HCT116 (cell line): ENCODE measurements at regions of chrX and their contacts with region 1.

Region 1: GRCh38 chrX:154505734-154506133 is 10.3 kb downstream of the FAM3A start:
- DNase-seq: no peak
- ATAC-seq: 0 out of 2 replicates have a peak, but pooled peaks have one; percentile 22
- H3K4me3 ChIP-seq: no peak overlapping the region
- H3K27ac ChIP-seq: no peak overlapping the region
- H3K4me1 ChIP-seq: peaks cover 0 to 5% of the 10 kb centered on the region in 2 experiments; a peak in 1 of 4 replicates
- H3K27me3 ChIP-seq: no peaks in the 10 kb centered on the region
- CTCF ChIP-seq: no peak
- POLR2A ChIP-seq: no peak
- RAD21 ChIP-seq: no peak

Region 2: GRCh38 chrX:154490414-154491083 is 15.2 kb before region 1 on chrX and contains the start of gene SLC10A3:
- CTCF ChIA-PET with region 1: no interaction called
- POLR2A ChIA-PET with region 1: interaction called, 12 read pairs
- RAD21 ChIA-PET with region 1: no interaction called
- intact Hi-C with region 1: no loop called
- DNase-seq: peak; percentile 89
- ATAC-seq: peak; percentile 86
- H3K4me3 ChIP-seq: peak within 1 kb of the TSS; percentile 61 to 68
- H3K27ac ChIP-seq: peak within 1 kb of the TSS; percentile 68
- H3K4me1 ChIP-seq: peaks cover 0 to 22% of the 10 kb centered on the region in 2 experiments; a peak in 1 of 4 replicates
- H3K27me3 ChIP-seq: no peaks in the 10 kb centered on the region
- CTCF ChIP-seq: no peak
- POLR2A ChIP-seq: peak; percentile 67
- RAD21 ChIP-seq: no peak
- total RNA-seq, gene SLC10A3: 16.2 TPM